Left ventricle myocardium inferior (tissue), 1 donor: ENCODE measurements at regions of chr7 and their contacts with region 1.

Region 1: GRCh38 chr7:21753071-21753470 is 192.6 kb downstream of the CDCA7L start:
- DNase-seq: no peak
- H3K4me3 ChIP-seq: no peak overlapping the region
- H3K27ac ChIP-seq: no peak overlapping the region
- H3K4me1 ChIP-seq: no peaks in the 10 kb centered on the region
- H3K27me3 ChIP-seq: peaks cover 16% of the 10 kb centered on the region
- CTCF ChIP-seq: no peak

Region 2: DNA sequence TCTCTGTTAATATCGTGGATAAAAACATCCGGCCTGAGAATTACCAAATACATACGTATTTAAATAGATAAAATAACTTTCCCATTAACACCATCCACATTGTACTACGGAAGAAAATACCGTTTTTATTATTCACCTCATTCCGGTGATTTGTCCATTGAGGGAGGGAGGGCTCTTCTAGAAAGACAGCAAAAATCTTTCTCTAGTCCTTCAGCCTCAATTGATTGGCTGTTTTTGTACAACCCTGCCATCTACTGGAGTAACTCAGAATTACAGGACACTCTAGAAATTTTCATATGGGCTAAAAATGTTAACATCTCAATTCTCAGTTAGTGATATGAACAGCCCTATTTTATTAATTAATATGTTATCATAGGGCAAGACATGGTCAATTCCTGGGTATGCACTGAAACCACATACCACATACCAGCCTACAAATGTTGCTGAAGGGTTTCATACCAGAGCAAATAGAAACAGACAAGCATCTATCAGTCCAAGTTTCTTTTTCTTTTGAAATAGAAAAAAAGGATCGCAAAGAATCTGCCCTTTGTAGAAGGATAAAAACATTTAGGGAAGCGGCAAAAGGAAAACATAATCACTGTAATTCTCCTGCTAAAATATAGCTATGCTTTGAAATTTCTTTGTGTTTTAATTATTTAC is 248.4 kb after region 1 on chr7:
- intact Hi-C with region 1: loop called (anchors 10 kb)
- DNase-seq: no peak
- H3K4me3 ChIP-seq: peak overlapping the region; percentile 33
- H3K27ac ChIP-seq: no peak overlapping the region
- H3K4me1 ChIP-seq: peaks cover 5% of the 10 kb centered on the region
- H3K27me3 ChIP-seq: peaks cover 4% of the 10 kb centered on the region
- CTCF ChIP-seq: peak; percentile 88